Activated naive CD4-positive, alpha-beta T cell treated with anti-CD3 and anti-CD28 coated beads for 36 hours (primary cell): ENCODE measurements at regions of chr10 and their contacts with region 1.

Region 1: GRCh38 chr10:91632671-91633550 is at the start of gene PPP1R3C:
- DNase-seq: peak; percentile 63
- H3K4me3 Mint-ChIP-seq: peak within 1 kb of the TSS; percentile 71
- H3K27ac Mint-ChIP-seq: no peak within 1 kb of the TSS
- H3K4me1 Mint-ChIP-seq: peaks cover 9% of the 10 kb centered on the region
- H3K27me3 Mint-ChIP-seq: peaks cover 55% of the 10 kb centered on the region
- total RNA-seq, gene PPP1R3C: 0.07 to 0.12 TPM

Region 2: DNA sequence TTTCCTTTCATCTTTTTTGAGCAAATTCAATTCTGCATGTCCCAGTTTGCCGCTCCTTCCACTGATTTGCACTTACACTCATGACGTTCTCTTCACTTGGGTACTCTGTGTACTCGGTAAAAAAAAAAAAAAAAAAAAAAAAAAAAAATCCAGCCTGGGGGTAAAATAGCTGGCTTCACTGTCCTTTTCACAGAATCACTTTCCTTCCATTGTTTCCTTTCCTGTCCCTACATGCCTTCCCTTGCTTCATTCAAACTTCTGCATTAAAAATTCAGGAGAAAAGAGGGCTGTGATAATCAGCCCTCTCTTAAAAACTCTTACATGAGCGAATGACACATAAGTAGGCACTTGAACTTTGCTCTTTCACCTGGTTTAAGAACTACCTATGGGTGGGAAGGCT is 720.7 kb before region 1 on chr10:
- CTCF ChIA-PET with region 1: interaction called, 8 read pairs
- intact Hi-C with region 1: loop called (anchors 2 kb)
- DNase-seq: no peak
- H3K4me3 Mint-ChIP-seq: no peak overlapping the region
- H3K27ac Mint-ChIP-seq: no peak overlapping the region
- H3K4me1 Mint-ChIP-seq: peaks cover 2% of the 10 kb centered on the region
- H3K27me3 Mint-ChIP-seq: no peaks in the 10 kb centered on the region

Region 3: DNA sequence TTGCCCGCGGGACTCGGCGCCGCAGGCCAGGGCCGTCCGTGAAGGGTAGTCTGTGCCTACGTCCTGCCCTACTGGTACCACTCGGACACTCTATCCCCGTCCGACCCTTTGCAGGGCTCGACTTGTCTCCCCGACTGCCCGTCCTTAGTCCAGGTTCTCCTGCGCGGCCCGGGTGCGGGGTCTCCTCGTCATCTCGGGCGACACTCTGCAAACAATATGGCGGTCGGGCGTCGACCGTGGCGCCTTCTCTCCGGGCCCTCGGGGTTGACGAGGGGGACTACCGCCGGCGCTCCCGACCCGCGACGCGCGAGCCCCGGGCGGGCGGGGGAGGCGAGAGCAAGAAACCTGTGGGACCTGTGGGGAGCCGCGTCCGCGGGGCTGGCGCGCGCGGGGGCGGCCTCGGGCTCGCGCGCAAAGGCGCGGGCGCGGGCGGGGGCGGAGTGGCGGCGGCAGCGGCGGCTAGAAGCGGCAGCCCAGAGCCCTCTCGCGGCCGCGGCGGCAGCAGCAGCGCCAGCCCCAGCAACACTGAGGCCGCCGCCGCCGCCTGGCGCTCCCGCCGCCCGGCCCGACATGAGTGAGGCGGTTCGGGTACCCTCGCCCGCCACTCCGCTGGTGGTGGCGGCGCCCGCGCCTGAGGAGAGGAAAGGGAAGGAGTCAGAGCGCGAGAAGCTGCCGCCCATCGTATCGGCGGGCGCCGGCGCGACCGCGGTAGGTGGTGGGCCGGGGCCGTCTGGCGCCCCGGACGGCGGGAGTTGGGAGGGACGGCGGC is 222.9 kb before region 1 on chr10 and contains the start of gene HECTD2:
- CTCF ChIA-PET with region 1: interaction called, 4 read pairs
- intact Hi-C with region 1: loop called (anchors 1 kb)
- DNase-seq: peak; percentile 77
- H3K4me3 Mint-ChIP-seq: peak within 1 kb of the TSS; percentile 83
- H3K27ac Mint-ChIP-seq: peak within 1 kb of the TSS; percentile 88
- H3K4me1 Mint-ChIP-seq: peaks cover 15% of the 10 kb centered on the region
- H3K27me3 Mint-ChIP-seq: peaks cover 12% of the 10 kb centered on the region
- total RNA-seq, gene HECTD2: 2.3 to 3.1 TPM

Region 4: DNA sequence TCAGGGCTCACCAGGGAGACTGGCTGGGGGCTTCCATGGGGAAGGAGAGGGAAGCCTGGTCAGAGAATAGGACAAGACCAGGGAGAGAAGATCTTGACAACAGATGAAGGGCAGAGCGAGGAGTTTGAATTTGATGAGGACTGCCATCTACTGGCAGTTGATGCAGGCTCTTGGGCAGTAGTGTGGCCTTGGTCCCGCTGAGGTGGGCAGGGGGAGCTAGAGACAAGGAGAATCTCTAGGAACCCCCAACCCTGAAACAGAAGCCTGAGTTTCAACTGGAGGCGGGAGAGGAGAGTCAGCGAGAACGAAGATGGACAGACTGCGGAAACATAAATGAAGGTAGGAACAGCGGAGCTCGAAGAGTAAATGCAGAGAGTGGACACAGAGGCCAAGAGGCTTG is 81.1 kb before region 1 on chr10:
- CTCF ChIA-PET with region 1: interaction called, 11 read pairs
- intact Hi-C with region 1: loop called (anchors 1 kb)
- DNase-seq: peak; percentile 26
- H3K4me3 Mint-ChIP-seq: no peak overlapping the region
- H3K27ac Mint-ChIP-seq: no peak overlapping the region
- H3K4me1 Mint-ChIP-seq: no peaks in the 10 kb centered on the region
- H3K27me3 Mint-ChIP-seq: no peaks in the 10 kb centered on the region

Region 5: DNA sequence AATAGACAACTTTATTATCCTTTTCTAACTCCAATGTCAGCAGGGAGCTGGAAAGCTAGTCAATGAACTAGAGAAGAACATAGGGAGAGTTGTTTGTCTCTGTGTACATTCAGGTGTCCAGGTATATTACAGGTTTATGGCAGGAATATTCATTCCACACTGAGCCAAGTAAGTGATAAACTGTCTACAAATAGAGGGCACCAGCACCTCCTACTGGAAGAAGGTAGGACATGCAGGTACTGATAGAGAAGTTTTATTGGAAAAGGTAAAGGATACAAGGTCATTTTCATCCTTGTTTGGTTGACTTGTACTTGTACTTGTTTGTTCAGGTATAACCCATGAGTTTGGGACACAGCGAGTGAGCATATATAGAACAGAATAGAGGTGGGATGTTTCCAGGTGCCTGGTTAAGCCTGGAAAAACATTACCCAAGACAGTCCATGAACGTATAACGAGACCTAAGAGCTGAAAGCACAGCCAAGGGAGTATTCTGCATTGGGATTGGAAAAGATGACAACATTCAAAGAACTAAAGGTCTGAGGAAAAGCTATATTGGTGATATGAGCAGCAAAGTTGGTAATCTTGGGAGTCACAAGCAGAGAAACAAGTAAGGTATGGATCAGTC is 61.4 kb after region 1 on chr10:
- CTCF ChIA-PET with region 1: interaction called, 4 read pairs
- intact Hi-C with region 1: loop called (anchors 2 kb)
- DNase-seq: peak; percentile 37
- H3K4me3 Mint-ChIP-seq: no peak overlapping the region
- H3K27ac Mint-ChIP-seq: no peak overlapping the region
- H3K4me1 Mint-ChIP-seq: peaks cover 4% of the 10 kb centered on the region
- H3K27me3 Mint-ChIP-seq: peaks cover 5% of the 10 kb centered on the region